ENCODE measurements at regions of chr5 and their contacts with region 1.

Region 1: DNA sequence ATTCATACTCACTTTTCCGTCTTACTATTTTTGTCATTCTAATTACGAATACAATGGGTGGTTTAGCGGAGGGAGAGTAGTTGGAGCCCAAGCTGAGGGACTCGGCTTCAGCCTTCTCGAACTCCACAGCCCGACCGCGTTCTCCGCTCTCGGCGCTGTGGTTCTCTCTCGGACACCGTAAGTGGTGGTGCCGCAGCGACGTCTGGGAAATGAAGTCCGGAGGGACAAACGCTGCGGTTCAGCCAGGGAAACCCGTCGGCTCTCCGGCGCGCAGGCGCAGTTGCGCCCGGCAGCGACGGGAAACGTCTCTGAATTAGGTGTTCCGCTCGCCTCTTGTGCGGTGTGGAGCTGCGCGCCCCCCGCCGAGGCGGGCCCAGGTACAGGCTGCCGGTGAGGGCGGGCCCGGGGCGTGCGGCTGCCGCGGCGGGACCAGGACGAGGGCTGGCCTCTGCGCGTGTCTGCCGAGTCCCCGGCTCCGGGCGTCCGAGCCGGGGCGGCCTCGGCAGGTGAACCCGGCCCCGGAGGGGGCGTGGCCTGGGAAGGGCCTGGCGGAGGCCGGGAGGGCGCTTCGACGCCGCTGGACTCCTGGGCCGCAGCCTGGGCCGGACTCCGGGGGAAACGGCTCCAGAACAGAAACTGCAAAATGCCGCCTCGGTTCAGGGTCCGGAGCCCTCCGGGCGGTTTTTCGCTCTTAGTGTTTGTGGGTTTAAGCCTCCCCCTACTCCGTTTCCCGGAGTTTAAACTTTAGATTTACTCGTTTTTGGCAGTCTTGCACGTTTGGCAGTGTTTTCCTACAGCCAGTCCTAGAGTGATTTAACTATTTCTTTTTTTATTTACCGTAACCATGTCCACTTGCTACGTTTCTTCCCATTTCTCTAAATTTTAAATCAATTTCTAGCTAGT is at the start of gene ZNF879:
- DNase-seq: peak; percentile 98
- total RNA-seq, gene ZNF879: 2.7 to 3.2 TPM

Region 2: DNA sequence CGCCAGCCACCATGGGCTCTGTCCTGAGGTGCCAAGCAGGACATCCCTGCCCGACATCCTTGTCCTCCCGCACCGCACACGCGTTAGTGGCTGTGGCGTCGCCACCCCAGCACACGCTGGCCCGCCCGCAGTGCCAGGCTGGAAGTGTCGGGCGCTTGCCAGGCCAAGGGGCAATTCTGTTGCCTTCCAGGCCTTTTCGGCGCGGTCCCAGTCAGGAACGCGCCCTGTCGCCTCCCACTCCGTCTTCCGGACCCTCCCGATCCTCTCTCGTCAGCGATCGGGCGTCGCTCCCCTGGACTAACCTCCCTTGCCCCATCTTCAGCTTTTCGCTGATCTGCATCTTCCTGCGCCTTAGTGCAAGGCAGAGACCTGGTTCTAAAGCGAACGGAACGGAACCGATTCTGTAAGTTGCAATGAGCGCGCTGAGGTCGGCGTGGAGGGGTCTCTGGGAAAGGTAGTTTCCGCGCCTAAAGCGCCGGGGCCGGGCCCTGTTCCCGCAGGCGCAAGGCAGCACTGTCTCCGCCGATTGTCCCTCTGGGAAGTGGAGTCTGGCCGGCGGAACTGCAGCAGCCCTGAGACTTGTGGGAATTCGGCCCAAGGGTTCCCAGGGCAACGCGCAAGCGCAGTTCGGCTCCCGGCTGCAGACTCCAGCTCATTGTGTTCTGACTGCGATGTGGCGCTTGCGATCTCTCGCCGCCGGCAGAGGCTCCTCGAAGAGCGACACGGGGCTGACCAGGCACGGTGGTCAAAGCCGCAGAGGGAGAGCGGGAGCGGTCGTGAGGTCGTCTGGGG is 83.0 kb before region 1 on chr5 and contains the start of gene ZNF454:
- intact Hi-C with region 1: loop called in 1 of 2 experiments (anchors 10 kb)
- DNase-seq: peak; percentile 97
- total RNA-seq, gene ZNF454: 2.3 to 3.4 TPM

Measured in posterior vena cava (tissue), 2 donors.